H1 (cell line): ENCODE measurements at regions of chr11 and their contacts with region 1.

Region 1: GRCh38 chr11:6269994-6270393 is 10.4 kb downstream of the CCKBR start:
- DNase-seq: peak in 1 of 2 experiments; percentile 69
- H3K4me3 ChIP-seq: no peak overlapping the region
- H3K27ac ChIP-seq: no peak overlapping the region
- H3K4me1 ChIP-seq: peaks cover 0 to 4% (median 0%) of the 10 kb centered on the region in 4 experiments; a peak in 1 of 7 replicates
- H3K27me3 ChIP-seq: peaks cover 0 to 2% (median 0%) of the 10 kb centered on the region in 4 experiments; a peak in 1 of 7 replicates
- CTCF ChIP-seq: peak; percentile 63 to 88 (median 69)
- EP300 ChIP-seq: no peak
- POLR2A ChIP-seq: no peak
- RAD21 ChIP-seq: peak; percentile 50 to 63

Region 2: DNA sequence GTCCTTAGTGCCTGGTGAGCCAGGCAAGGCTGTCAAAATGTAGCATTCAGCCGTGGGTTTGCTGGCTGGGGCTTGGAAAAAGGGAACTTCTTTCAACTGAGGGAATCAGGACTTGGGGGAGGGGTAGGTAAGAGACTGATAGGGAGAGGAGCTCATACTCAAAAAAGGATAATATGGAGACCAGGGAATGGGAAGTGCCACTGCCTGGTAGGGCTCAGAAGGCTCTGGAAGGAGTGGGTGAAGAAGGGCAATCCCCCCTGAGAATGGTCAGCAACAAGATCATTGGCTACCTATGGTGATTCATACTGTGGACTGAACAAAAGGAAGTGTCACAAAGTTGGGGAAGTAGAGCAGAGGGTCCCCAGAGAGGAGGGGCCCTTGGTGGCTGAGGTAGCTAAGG is 29.2 kb before region 1 on chr11:
- CTCF ChIA-PET with region 1: interaction called, 22 read pairs
- POLR2A ChIA-PET with region 1: no interaction called
- DNase-seq: no peak
- H3K4me3 ChIP-seq: no peak overlapping the region
- H3K27ac ChIP-seq: no peak overlapping the region
- H3K4me1 ChIP-seq: no peaks in the 10 kb centered on the region; a peak in 1 of 7 replicates
- H3K27me3 ChIP-seq: peaks cover 0 to 2% (median 1%) of the 10 kb centered on the region in 4 experiments; a peak in 1 of 7 replicates
- CTCF ChIP-seq: no peak
- EP300 ChIP-seq: no peak
- POLR2A ChIP-seq: no peak
- RAD21 ChIP-seq: no peak

Region 3: GRCh38 chr11:6285019-6285418 is 15.0 kb after region 1 on chr11:
- CTCF ChIA-PET with region 1: interaction called, 34 read pairs
- POLR2A ChIA-PET with region 1: interaction called, 3 read pairs
- DNase-seq: no peak
- H3K4me3 ChIP-seq: no peak overlapping the region
- H3K27ac ChIP-seq: no peak overlapping the region
- H3K4me1 ChIP-seq: peaks cover 0 to 2% (median 0%) of the 10 kb centered on the region in 4 experiments; a peak in 2 of 7 replicates
- H3K27me3 ChIP-seq: peaks cover 12 to 75% (median 45%) of the 10 kb centered on the region in 4 experiments
- CTCF ChIP-seq: no peak
- EP300 ChIP-seq: no peak
- POLR2A ChIP-seq: no peak
- RAD21 ChIP-seq: no peak

Region 4: DNA sequence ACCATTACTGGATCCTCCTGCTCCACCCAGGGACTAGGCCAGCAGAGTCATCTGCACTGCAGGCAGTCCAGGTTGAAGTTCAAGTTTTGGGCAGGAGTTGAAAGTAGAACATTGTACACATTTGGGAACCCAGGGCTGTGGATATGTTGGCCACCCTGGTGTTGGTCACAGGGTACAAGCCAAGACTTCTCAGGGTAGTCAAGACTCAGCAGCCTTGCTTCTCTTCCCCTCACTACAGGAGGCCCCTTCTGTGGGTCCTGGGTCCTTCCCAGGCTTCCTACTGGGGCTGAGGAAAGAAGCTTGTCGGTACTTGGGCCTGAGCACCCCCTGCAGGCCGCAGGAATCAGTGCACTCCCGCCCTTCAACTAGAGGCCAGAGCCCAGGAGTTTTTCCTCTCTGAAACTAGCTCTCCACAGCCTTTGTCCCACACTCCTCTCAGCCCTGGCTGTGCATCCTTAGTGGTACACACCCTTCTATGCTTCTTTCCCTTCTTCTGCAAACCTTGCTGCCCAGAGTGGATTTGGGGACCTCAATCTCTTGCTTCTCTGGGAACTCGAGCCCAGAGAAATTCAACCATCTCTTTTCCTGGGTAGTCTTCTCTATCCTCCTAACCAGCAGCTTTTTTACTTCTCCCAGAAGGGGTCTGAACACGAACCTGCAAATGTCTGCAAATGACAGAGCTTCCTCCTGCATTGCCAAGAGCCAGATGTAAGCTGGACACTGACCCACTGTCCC is 173.4 kb after region 1 on chr11:
- CTCF ChIA-PET with region 1: no interaction called
- POLR2A ChIA-PET with region 1: no interaction called
- DNase-seq: peak in 1 of 2 experiments; percentile 77
- H3K4me3 ChIP-seq: no peak overlapping the region
- H3K27ac ChIP-seq: no peak overlapping the region
- H3K4me1 ChIP-seq: peaks cover 0 to 4% (median 0%) of the 10 kb centered on the region in 4 experiments; a peak in 2 of 7 replicates
- H3K27me3 ChIP-seq: no peaks in the 10 kb centered on the region
- CTCF ChIP-seq: peak; percentile 79 to 95 (median 92)
- EP300 ChIP-seq: no peak
- POLR2A ChIP-seq: no peak
- RAD21 ChIP-seq: peak; percentile 81 to 82